GM10248 (cell line): ENCODE measurements at regions of chr5 and their contacts with region 1.

Region 1: GRCh38 chr5:14650052-14650451 is 14.5 kb upstream of the OTULIN start:
- DNase-seq: no peak
- CTCF ChIP-seq: no peak

Region 2: DNA sequence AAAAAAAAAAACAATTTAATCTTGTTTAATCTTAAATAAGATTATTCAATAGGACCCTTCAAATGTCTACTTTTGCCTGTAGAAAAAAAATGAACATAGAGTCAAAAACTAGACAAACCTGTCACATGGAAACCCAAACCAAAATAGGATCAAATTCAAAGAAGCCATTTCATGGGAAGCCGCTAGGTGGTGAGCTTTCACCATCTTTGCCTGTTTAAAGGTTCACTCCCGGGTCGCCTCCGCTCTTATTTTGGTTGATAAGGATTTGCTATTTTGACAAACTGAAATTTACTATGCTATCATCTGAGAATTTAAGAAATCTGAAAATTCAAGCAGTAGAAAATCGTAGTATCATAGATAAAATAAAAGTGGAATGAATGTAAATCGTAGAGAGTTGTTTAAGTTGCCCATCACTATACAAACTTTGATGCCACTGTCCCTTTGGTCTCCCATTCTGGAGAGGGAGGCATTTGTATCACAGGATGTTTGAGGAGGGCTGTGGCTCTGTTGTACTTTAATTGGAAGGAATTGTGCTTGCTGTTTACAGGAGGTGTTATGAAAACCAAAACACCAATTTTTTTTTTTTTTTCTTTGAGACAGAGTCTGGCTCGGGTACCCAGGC is 662.1 kb before region 1 on chr5:
- CTCF ChIA-PET with region 1: interaction called, 47 read pairs
- POLR2A ChIA-PET with region 1: no interaction called
- DNase-seq: peak; percentile 66
- CTCF ChIP-seq: peak; percentile 69

Region 3: DNA sequence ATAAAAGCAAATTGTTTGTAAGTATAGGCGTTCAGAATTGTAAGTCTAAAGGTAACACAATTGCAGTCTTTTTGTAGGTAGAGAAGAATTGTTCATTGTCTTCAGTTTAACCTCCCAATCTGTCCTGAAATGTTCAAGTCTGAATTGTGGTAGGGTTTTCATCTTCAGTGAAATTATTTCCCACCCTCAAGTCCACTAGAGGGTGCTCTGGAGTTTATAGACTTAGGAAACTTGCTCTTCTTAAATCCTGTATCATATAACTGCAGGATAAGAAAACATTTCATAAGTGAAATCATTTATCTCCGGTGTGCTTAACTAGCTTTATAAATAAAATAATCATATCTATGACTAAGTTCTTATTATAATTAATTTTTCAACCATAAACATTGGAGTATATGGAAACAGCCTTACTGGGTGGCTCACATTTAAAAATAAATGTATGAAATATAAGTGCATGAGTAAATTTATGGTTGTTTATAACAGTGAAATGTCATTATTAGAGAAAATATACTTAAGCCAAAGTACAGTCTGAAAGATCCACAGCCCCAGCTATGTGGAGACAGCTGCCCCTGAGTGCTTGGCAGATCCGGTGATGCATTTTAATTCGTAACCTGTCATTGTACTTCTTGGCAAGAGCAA is 250.9 kb before region 1 on chr5:
- CTCF ChIA-PET with region 1: interaction called, 67 read pairs
- POLR2A ChIA-PET with region 1: no interaction called
- DNase-seq: peak; percentile 36
- CTCF ChIP-seq: peak; percentile 56

Region 4: DNA sequence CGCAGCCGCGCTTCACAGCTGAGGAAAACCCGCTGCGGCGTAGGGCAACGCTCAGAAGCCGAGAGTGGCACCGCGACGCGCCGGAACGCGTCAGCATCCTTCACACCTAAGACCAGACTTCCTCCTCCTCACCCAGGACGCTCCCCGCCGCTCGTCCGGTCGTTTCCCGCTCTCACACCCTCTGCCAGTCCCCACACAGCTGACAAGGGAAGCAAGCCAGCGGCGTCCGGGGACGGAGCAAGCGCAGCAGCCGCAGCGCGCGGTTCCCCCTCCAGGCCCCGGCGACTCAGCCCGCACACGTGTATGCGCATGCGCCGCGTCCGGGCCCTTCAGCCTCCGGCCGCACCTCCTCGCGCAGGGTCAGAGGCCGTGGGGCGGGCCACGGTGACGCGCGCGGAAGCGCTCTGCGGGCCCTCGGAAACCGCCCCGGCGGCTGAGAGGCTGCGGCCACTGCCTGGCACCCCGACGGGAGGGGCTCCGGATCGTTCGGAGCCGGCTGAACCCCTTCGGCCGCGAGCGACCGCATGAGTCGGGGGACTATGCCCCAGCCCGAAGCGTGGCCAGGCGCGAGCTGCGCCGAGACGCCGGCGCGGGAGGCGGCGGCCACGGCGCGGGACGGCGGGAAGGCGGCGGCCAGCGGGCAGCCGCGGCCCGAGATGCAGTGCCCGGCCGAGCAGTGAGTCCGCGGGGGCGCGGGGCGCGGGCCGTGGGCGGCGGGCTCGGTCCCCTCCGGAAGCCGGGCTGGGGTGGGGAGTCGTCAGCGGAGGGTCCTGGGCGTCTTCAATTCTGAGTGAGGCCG is 14.4 kb after region 1 on chr5 and contains the start of gene OTULIN:
- CTCF ChIA-PET with region 1: interaction called, 80 read pairs
- POLR2A ChIA-PET with region 1: interaction called, 3 read pairs
- DNase-seq: peak; percentile 97
- CTCF ChIP-seq: no peak

Region 5: DNA sequence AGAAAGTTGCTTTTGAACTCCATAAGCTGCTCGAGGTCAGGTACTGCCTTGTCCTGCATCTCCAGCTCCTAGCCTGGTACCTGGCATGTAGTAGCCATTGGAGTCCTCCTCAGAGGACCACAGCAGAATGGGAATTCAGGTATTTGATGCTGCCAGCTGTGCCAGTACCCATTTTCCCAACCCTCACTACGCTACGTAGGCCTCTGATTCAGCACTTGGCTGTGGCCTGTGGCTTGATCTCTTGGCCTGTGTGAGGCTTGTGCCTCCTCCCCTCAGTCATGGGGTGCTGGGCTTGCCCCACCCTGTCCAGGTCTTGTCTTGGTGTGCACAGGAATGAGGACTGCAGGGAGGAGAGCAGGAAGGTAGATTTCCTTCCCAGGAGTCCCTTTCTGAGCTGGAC is 26.3 kb after region 1 on chr5:
- CTCF ChIA-PET with region 1: interaction called, 14 read pairs
- POLR2A ChIA-PET with region 1: no interaction called
- DNase-seq: no peak
- CTCF ChIP-seq: no peak